PC-9 (cell line): ENCODE measurements at regions of chr2 and their contacts with region 1.

Region 1: DNA sequence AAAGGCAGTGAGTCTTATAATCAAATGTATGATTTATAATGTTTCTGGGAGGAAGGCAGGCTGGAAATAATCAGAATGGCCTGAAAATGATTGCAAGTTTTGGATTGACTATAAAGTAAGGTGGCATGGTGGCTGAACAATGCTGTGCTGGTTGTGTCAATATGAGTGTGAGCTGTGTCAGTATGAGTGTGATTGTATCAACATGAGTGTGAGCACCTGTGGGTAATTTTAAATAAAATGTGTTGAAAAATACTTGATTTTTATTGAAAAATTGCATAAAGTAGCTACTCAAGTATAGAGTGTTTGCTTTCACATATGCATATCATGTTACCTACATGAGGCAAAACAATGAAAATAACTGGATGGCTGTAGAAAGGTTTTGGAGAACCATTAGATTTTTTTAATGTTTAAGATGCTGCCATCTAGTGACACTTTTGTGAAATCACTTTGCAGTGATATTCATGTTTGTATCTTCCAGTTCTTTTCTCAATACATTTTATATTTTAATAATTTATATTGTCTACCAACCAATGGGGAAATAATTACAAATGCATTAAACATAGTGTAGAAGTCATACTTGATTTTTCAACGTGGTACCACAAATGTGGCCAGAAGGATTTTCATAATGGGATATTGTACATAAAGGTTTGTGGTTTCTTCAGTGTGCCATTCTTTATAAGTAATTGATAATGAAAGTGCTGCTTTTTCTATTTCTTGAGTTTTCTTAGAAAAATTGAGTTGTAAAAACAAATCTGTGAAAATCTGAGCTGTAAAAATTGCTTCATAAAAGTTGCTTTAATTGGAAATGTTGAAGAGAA is 103.3 kb downstream of the KYNU start:
- DNase-seq: peak in 1 of 2 experiments; percentile 74
- H3K4me3 ChIP-seq: no peak overlapping the region
- H3K27ac ChIP-seq: peak overlapping the region; percentile 73
- H3K4me1 ChIP-seq: peaks cover 29% of the 10 kb centered on the region
- H3K27me3 ChIP-seq: no peaks in the 10 kb centered on the region
- CTCF ChIP-seq: peak; percentile 81

Region 2: DNA sequence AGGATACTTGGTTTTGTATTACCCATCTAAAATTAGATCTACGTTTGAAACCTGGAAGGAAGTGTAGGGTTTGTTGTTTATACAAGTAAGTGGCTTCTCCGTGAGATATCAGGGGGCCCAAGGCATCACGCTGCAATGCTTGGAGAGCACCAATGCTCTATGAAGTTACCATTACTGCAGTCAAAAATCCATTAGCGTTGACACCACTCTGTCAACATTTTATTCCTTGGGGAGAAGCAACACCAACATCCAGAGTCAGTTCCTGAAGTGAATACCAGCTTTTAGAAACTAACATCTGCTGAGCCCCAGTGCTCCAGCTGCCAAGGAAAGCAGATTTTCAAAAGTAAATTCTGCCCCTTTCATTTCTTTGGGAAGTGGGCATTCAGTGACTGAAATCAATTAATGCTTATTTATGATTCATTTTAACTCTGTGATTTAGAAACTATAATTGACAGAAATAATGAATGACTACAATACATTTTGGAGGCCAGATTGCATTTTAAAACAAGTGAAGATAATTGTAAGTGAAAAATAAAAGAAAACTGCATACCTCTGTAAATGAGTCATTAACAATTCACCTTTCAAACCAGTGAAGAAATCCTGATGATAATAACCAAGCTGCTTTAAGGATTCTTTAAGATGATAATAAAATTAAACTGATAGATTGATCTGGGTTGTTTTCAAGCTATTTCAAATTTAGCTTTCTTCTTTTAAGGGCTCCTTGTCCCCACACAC is 880.5 kb before region 1 on chr2:
- CTCF ChIA-PET with region 1: no interaction called
- POLR2A ChIA-PET with region 1: no interaction called
- intact Hi-C with region 1: no loop called
- DNase-seq: no peak
- H3K4me3 ChIP-seq: no peak overlapping the region
- H3K27ac ChIP-seq: no peak overlapping the region
- H3K4me1 ChIP-seq: no peaks in the 10 kb centered on the region
- H3K27me3 ChIP-seq: no peaks in the 10 kb centered on the region
- CTCF ChIP-seq: no peak

Region 3: GRCh38 chr2:142603759-142604158 is 377.0 kb before region 1 on chr2:
- CTCF ChIA-PET with region 1: no interaction called
- POLR2A ChIA-PET with region 1: no interaction called
- intact Hi-C with region 1: loop called (anchors 5 kb)
- DNase-seq: no peak
- H3K4me3 ChIP-seq: no peak overlapping the region
- H3K27ac ChIP-seq: no peak overlapping the region
- H3K4me1 ChIP-seq: peaks cover 10% of the 10 kb centered on the region
- H3K27me3 ChIP-seq: no peaks in the 10 kb centered on the region
- CTCF ChIP-seq: peak; percentile 65

Region 4: GRCh38 chr2:142642654-142643053 is 338.1 kb before region 1 on chr2:
- CTCF ChIA-PET with region 1: interaction called, 3 read pairs
- POLR2A ChIA-PET with region 1: no interaction called
- intact Hi-C with region 1: loop called (anchors 5 kb)
- DNase-seq: no peak
- H3K4me3 ChIP-seq: no peak overlapping the region
- H3K27ac ChIP-seq: no peak overlapping the region
- H3K4me1 ChIP-seq: no peaks in the 10 kb centered on the region
- H3K27me3 ChIP-seq: no peaks in the 10 kb centered on the region
- CTCF ChIP-seq: no peak

Region 5: DNA sequence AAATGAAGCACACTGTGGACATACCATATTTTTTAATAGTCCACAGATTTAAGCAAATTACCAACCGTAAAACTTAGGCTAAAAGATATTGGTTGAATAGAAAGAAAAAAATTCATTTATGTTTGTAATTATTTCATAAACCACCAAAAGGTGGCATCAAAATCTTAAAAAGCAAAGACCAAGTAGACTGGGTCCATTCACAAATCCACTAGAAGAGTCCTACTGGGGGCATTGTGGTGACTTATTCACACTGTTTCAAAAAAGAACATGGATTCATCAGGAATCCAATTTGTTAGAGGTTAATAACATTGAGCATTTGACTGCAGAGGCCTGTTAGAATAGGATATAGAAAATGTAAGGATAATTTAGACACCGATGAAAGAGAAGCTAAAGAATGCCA is 298.2 kb before region 1 on chr2:
- CTCF ChIA-PET with region 1: interaction called, 3 read pairs
- POLR2A ChIA-PET with region 1: no interaction called
- intact Hi-C with region 1: loop called (anchors 2 kb)
- DNase-seq: no peak
- H3K4me3 ChIP-seq: no peak overlapping the region
- H3K27ac ChIP-seq: no peak overlapping the region
- H3K4me1 ChIP-seq: no peaks in the 10 kb centered on the region
- H3K27me3 ChIP-seq: no peaks in the 10 kb centered on the region
- CTCF ChIP-seq: peak; percentile 47; the same call in 1 of the 2 replicates

Region 6: GRCh38 chr2:142796161-142796560 is 184.6 kb before region 1 on chr2:
- CTCF ChIA-PET with region 1: no interaction called
- POLR2A ChIA-PET with region 1: no interaction called
- intact Hi-C with region 1: loop called (anchors 5 kb)
- DNase-seq: no peak
- H3K4me3 ChIP-seq: no peak overlapping the region
- H3K27ac ChIP-seq: no peak overlapping the region
- H3K4me1 ChIP-seq: no peaks in the 10 kb centered on the region
- H3K27me3 ChIP-seq: no peaks in the 10 kb centered on the region
- CTCF ChIP-seq: no peak

Region 7: DNA sequence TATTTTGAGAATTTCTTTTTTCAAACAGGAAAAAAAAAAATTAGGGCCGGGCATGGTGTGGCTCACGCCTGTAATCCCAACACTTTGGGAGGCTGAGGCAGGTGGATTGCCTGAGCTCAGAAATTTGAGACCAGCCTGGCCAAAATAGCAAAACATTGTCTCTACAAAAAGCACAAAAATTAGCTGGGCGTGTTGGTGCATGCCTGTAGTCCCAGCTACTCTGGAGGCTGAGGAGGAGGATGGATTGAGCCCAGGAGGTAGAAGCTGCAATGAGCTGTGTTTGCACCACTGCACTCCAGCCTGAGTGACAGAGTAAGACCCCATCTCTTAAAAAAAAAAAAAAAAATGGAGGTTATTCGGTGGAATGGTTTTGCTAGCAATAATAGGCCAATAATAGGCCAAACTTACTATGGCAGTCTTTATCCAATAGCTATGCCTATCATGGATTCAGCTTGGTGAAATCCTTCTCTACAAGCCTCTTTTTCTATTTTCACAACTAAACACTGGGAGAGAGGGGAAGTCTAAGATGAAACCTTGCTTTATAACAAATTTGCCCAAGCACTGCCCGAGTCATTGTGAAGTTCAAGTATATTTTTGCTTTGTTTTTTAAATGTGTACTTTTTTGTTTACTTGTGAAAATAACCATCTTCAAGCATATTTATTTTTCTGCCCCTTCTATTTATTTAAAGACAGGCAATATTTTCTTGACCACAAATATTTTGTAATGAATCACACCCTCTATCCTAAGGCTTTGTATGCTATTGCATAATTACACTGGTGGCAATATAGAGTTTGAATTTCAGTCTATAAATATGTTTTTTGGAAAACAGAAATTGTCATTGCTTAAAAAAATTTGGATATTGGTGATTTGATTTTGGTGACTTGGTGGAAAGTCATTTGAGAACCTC is 123.3 kb before region 1 on chr2:
- CTCF ChIA-PET with region 1: no interaction called
- POLR2A ChIA-PET with region 1: no interaction called
- intact Hi-C with region 1: no loop called
- DNase-seq: peak in 1 of 2 experiments; percentile 77
- H3K4me3 ChIP-seq: peak overlapping the region; percentile 22
- H3K27ac ChIP-seq: peak overlapping the region; percentile 87
- H3K4me1 ChIP-seq: peaks cover 34% of the 10 kb centered on the region
- H3K27me3 ChIP-seq: no peaks in the 10 kb centered on the region
- CTCF ChIP-seq: no peak

Region 8: DNA sequence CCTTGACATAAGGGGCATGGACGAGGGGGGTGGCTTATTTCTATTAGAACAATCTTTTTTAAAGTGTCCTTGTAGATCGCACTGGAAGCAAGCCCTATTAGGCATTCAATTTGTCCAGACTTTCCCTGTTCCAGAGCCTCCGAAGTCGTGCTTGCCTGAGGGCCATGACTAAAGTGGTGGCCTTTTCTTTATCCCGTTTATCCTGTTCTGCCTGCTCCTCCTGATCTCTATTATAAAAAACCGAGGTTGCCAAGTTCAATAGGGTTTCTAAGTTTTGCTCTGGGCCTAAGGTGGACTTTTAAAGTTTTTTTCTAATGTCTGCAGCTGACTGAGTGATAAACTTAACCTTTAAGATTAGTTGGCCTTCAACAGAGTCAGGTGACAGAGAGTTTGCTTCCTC is 77.0 kb before region 1 on chr2:
- CTCF ChIA-PET with region 1: no interaction called
- POLR2A ChIA-PET with region 1: no interaction called
- intact Hi-C with region 1: loop called (anchors 1 kb)
- DNase-seq: peak; percentile 80 to 97
- H3K4me3 ChIP-seq: peak overlapping the region; percentile 2; the same call in 1 of the 2 replicates
- H3K27ac ChIP-seq: peak overlapping the region; percentile 94
- H3K4me1 ChIP-seq: peaks cover 53% of the 10 kb centered on the region
- H3K27me3 ChIP-seq: no peaks in the 10 kb centered on the region
- CTCF ChIP-seq: no peak